AG04449 (cell line): ENCODE measurements at regions of chr2 and their contacts with region 1.

Region 1: DNA sequence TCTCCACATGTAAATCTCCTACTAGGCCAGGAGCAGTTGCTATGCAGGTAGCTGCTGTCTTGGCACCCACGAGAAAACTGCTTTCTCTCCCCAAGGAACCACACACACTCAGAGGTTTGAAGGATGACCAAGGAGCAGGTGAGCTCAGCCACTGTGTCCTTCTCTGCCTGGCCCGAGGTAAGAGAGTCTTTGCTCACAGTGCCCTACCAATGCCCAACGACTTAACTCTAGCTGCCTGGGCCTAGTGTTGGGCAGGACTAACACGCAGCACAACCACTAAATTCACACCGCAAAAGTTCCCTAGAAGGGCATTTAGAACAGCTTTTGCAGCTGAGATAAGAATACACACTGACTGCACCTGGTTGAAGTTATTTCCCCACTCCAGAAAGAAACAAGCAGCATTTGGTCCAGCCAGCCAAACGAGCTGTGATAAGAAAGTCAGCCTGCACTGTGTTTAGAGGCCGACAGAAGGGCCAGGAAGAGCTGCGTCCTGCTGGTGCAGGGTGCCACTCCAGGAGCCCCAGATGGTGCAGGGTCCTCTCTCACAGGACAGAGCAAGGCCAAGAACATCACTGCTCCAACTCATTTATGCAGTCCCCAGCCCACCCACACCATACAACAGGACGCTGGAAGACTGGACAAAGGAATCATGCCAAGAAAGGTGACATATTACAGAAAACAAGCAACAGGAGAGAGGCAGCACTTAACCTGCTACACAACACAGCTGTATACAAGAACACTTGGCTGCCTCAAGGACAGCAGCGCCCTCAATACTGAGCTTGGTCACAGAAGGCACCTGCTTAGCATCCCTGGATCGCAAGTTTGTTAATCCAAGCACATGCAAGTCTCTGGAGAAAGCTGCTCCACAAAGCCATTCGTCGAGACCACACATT is 12.5 kb downstream of the HDLBP start:
- DNase-seq: no peak
- H3K4me3 ChIP-seq: no peak overlapping the region
- CTCF ChIP-seq: no peak

Region 2: DNA sequence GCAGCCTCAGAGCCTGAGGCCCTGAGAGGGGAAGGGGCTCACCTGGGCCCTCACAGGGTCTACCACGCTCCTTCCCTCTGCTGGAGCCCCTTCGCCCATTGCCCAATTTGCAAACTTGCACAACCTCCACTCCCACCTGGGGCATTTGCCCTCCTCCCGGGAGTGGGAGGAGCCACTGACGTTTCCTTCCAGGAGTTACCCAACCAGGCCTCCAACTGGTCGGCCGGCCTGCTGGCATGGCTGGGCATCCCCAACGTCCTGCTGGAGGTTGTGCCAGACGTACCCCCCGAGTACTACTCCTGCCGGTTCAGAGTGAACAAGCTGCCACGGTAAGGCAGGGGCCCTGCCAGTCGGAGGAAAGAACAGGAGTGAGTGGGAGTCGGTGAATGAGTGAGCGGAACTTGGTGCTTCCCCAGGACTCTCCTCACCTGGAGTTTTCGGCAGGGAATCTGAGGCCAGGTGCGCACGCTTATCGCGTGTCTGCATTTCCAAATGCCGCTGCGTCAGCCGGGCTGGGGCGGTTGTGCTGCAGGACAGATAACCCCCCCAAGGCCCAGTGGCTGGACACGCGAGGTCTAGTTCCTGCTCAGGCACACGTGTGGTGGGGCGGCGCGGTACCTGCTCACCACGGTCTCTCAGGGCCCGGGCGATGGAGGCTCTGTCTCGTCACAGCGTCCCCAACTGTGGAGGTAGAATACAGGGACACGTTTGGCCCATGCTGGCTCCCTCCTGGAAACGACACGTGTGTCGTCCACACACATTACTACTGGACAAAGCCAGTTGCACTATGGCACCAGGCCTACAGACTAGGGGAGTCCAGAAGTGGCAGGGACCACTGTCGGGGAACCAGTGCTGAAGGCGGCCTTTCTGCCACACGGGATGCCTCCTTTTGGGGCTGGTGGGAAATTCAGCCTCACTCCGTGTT is 102.8 kb before region 1 on chr2:
- CTCF ChIA-PET with region 1: no interaction called
- POLR2A ChIA-PET with region 1: no interaction called
- DNase-seq: no peak
- H3K4me3 ChIP-seq: no peak overlapping the region
- CTCF ChIP-seq: no peak

Region 3: DNA sequence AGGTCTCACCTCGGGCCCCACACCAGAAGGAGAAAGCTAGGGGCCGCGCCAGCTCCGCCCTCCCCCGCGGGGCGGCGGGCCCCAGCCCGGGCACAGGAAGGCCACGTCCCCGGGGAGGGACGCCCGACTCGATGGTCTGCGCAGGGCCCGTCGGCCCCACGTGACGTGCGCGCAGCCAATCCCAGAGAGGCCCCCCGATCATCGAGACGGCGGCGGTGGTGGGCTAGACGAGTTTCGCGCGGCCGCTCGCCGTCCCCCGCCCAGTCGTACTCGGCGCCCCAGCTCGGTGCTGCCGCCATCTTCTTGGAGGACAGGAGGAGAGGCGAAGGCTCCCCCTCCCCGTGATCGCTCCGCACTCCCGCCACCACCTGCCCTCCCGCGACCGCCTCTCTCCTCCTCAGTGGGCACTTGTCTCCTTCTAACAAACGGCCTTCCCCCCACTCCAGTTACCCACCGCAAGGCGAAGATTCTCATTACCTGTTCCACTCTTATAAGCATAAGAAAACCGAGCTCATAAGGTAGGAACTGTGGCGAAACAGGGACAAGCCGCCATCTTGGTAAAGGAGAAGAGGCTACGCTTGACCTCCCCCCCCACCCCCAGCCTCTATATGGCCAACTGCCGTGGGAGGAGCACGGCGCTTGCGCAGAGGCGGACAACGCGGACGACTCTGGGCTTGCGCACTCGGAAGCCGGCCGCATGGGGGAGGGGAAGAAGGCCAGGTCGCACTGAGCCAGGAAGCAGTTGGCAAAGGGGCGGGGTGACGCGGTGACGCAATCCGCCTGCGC is 12.3 kb after region 1 on chr2 and contains the start of gene HDLBP:
- CTCF ChIA-PET with region 1: interaction called, 23 read pairs
- POLR2A ChIA-PET with region 1: interaction called, 4 read pairs
- DNase-seq: peak; percentile 90
- H3K4me3 ChIP-seq: peak within 1 kb of the TSS; percentile 96
- CTCF ChIP-seq: peak; percentile 54

Region 4: DNA sequence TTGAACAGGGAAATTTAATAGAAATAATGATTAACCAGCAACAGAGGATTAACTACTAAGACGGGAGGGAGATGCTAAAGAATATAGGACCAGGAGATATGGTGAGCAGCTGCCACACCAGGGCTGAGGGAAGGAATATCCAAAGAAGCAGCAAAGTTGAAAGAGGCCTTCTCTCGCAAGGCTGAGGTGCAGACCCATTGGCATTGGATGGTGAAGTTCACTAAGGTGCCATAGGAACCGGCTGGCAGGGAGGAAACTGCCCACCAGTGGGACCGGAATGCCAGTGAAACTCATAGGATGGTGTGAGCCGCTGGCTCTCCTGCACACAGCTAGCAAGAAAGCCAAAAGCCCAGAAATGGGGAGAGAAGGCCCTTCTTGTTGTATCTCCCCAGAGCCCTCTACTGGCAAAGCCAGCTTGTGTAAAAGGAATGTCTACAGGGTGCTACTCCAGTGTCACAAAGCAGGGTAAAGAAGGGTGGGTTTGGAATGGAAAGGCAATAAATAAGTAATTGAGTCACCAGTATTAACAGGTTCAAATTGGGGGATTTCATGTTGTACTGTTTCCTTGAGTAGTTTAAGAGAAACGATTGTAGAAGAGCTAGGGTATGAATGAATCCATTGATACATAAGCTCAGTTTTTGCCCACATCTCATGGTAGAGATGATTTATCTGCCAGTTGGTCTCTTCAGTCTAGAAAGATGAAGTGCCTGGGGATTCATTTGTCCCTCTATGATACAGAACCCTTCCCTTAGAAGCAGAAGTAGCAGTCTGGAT is 89.1 kb after region 1 on chr2:
- CTCF ChIA-PET with region 1: no interaction called
- POLR2A ChIA-PET with region 1: no interaction called
- DNase-seq: no peak
- H3K4me3 ChIP-seq: no peak overlapping the region
- CTCF ChIP-seq: peak; percentile 46